Activated CD4-positive, alpha-beta memory T cell treated with anti-CD3 and anti-CD28 coated beads, Interleukin-2, amount 10 ng/mL, durations not matched to agents 7 days and 5 days (primary cell): ENCODE measurements at regions of chr7 and their contacts with region 1.

Region 1: GRCh38 chr7:24907311-24907886 is 72.6 kb downstream of the OSBPL3 start:
- DNase-seq: peak; percentile 52
- H3K4me3 Mint-ChIP-seq: no peak overlapping the region
- H3K27ac Mint-ChIP-seq: no peak overlapping the region
- H3K4me1 Mint-ChIP-seq: peaks cover 28% of the 10 kb centered on the region
- H3K27me3 Mint-ChIP-seq: no peaks in the 10 kb centered on the region

Region 2: GRCh38 chr7:24825931-24826661 is 81.3 kb before region 1 on chr7:
- CTCF ChIA-PET with region 1: interaction called, 22 read pairs
- POLR2A ChIA-PET with region 1: interaction called, 47 read pairs
- DNase-seq: peak; percentile 26
- H3K4me3 Mint-ChIP-seq: peak overlapping the region; percentile 43
- H3K27ac Mint-ChIP-seq: peak overlapping the region; percentile 87
- H3K4me1 Mint-ChIP-seq: peaks cover 83% of the 10 kb centered on the region
- H3K27me3 Mint-ChIP-seq: no peaks in the 10 kb centered on the region

Region 3: DNA sequence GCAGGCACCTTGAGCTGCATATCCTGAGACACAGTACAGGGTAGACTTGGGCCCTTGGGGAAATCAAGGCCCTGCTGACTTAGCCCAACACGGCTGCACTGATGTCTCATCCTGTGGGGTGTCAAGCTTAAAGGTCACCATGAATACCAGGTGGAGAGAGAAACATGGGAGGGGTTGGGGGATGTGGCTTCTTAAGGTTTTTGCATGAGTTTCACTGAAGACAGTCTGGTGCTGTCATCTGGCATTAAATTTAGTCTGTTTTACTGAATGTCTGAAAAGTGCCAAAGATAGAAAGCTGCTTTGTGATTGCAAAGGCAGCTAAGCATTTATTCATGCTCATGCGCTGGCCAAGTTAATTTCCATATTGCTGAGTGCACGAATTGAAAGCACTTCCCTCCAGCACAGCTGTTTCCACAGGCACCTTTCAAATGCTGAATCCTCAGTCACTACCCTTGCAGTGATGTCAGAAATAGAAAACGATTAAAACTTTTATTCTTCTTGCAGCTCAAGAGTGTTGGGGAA is 29.5 kb before region 1 on chr7:
- CTCF ChIA-PET with region 1: interaction called, 3 read pairs
- POLR2A ChIA-PET with region 1: interaction called, 18 read pairs
- DNase-seq: peak; percentile 50
- H3K4me3 Mint-ChIP-seq: peak overlapping the region; percentile 40
- H3K27ac Mint-ChIP-seq: peak overlapping the region; percentile 78
- H3K4me1 Mint-ChIP-seq: peaks cover 41% of the 10 kb centered on the region
- H3K27me3 Mint-ChIP-seq: no peaks in the 10 kb centered on the region

Region 4: GRCh38 chr7:24926623-24927524 is 19.5 kb after region 1 on chr7:
- CTCF ChIA-PET with region 1: interaction called, 5 read pairs
- POLR2A ChIA-PET with region 1: interaction called, 191 read pairs
- DNase-seq: no peak
- H3K4me3 Mint-ChIP-seq: no peak overlapping the region
- H3K27ac Mint-ChIP-seq: peak overlapping the region; percentile 21
- H3K4me1 Mint-ChIP-seq: peaks cover 69% of the 10 kb centered on the region
- H3K27me3 Mint-ChIP-seq: no peaks in the 10 kb centered on the region

Region 5: GRCh38 chr7:24965831-24966709 is 58.7 kb after region 1 on chr7:
- CTCF ChIA-PET with region 1: no interaction called
- POLR2A ChIA-PET with region 1: interaction called, 16 read pairs
- DNase-seq: peak; percentile 61
- H3K4me3 Mint-ChIP-seq: peak overlapping the region; percentile 2
- H3K27ac Mint-ChIP-seq: peak overlapping the region; percentile 74
- H3K4me1 Mint-ChIP-seq: peaks cover 84% of the 10 kb centered on the region
- H3K27me3 Mint-ChIP-seq: no peaks in the 10 kb centered on the region

Region 6: GRCh38 chr7:25125137-25125946 is 217.9 kb after region 1 on chr7 and contains the start of gene CYCS:
- CTCF ChIA-PET with region 1: no interaction called
- POLR2A ChIA-PET with region 1: interaction called, 25 read pairs
- DNase-seq: peak; percentile 100
- H3K4me3 Mint-ChIP-seq: peak within 1 kb of the TSS; percentile 93
- H3K27ac Mint-ChIP-seq: peak within 1 kb of the TSS; percentile 97
- H3K4me1 Mint-ChIP-seq: peaks cover 33% of the 10 kb centered on the region
- H3K27me3 Mint-ChIP-seq: peaks cover 2% of the 10 kb centered on the region
- total RNA-seq, gene CYCS: 108 to 111 TPM